ENCODE measurements at regions of chr18 and their contacts with region 1.

Region 1: DNA sequence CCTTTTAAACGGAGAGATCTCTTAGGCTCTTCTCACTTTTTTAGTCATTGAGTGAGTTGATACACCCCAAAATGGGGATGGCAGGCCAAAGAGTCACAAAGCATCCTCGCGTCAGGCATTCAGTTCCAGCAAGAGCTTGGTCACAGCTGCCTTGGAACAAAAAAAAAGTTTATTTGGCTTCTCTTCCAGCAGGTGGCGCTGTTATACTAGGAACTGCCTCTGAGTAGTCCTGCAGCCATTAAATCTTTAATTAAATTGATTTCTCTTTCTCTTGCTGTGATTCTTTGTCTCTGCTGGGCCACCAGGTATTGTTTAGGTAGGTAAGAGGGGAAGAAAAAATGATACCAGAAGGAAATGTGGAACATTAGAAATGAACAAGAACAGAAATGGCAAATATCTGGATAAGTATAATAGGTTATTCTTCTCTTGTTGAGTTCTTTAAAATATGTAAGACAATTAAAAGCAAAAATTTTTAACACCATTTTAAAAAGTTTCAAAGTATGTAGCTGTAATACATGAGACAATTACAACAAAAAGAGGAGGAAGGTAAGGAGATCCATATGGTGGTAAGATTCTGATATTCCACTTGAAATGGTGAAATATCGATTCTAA is 175.1 kb downstream of the GALNT1 start:
- DNase-seq: peak; percentile 59 to 72 (median 67)
- ATAC-seq: peak; percentile 92
- H3K4me3 ChIP-seq: no peak overlapping the region
- H3K27ac ChIP-seq: no peak overlapping the region
- H3K4me1 ChIP-seq: no peaks in the 10 kb centered on the region
- H3K27me3 ChIP-seq: peaks cover 11 to 32% of the 10 kb centered on the region in 2 experiments
- CTCF ChIP-seq: peak; percentile 72 to 89 (median 75)
- EP300 ChIP-seq: no peak
- POLR2A ChIP-seq: no peak
- RAD21 ChIP-seq: peak; percentile 93 to 95

Region 2: DNA sequence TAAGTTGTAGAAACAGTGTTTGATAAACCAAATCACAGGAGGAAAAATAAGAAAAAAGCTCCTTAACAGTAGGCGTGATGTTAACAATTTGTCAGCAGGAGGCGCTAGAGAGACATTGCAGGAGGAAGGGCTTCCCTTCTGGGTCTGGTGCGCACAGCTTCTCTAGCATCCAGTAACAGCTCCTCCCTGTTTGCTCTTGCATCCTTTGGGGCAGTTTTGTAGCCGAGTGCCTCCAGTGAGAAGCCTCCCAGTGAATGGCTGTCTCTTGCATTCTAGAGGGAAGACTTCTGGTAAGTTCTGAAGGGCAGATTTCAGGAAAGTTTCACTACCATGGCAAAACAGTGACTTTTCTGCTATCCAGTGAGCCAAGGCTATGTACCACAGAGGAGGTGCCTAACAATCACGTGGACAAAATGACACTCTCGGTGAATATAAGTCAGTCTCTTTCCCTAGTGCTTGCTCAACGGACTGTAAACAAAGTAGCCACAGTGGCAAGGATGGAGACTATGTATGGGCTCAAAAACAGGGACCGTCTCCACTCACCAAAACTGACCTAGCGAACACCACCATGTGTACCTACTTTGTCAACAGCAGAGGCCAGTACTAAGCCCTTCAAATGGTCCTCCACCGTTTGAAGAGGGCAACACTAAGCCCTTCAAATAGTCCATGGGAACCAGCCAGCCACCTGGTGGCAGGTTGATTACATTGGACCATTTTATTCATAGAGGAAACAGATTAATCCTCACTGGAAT is 369.8 kb before region 1 on chr18:
- CTCF ChIA-PET with region 1: no interaction called
- POLR2A ChIA-PET with region 1: no interaction called
- in situ Hi-C with region 1: loop called (anchors 10 kb)
- intact Hi-C with region 1: no loop called
- DNase-seq: peak; percentile 77 to 86 (median 78)
- ATAC-seq: peak; percentile 94
- H3K4me3 ChIP-seq: no peak overlapping the region
- H3K27ac ChIP-seq: no peak overlapping the region
- H3K4me1 ChIP-seq: no peaks in the 10 kb centered on the region
- H3K27me3 ChIP-seq: no peaks in the 10 kb centered on the region
- CTCF ChIP-seq: peak; percentile 82 to 98 (median 93)
- EP300 ChIP-seq: no peak
- POLR2A ChIP-seq: no peak
- RAD21 ChIP-seq: peak; percentile 83 to 89

Region 3: DNA sequence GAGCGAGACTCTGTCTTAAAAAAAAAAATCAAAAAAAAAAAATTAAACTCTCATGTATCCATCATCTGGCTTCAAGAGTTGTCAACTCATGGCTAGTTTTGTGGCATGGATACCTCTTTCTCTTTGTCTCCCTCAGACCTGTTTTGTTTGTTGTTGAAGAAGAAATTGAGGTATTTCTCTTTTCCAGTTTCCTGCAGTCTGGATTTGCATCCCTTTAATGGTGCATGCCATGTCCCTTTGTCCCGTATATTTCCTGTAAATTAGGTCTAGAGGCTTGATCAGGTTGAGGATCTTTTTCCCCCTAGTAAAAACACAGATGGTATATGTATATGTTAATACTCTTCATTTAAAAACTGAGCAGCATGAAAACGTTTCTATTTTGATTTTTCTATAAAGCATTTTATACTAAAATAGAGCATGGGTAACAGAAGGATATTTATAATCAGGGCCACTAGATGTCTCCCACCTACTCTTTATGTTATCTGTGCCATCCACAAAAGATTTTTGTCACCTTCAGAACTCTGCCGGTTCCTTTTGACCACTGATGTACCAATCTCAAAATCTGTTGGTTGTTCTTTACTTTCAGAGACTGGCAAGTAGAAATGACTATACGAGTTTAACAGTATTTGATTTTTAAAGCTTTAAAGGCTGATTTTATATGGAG is 95.0 kb before region 1 on chr18:
- CTCF ChIA-PET with region 1: no interaction called
- POLR2A ChIA-PET with region 1: no interaction called
- in situ Hi-C with region 1: no loop called
- intact Hi-C with region 1: loop called (anchors 5 kb)
- DNase-seq: no peak
- ATAC-seq: peak; percentile 63
- H3K4me3 ChIP-seq: no peak overlapping the region
- H3K27ac ChIP-seq: no peak overlapping the region
- H3K4me1 ChIP-seq: no peaks in the 10 kb centered on the region; a peak in 1 of 5 replicates
- H3K27me3 ChIP-seq: no peaks in the 10 kb centered on the region
- CTCF ChIP-seq: peak; percentile 10 to 53 (median 16); a peak in 3 of 6 replicates
- EP300 ChIP-seq: no peak
- POLR2A ChIP-seq: no peak
- RAD21 ChIP-seq: peak in 1 of 2 experiments; percentile 52; a peak in 2 of 4 replicates

Region 4: DNA sequence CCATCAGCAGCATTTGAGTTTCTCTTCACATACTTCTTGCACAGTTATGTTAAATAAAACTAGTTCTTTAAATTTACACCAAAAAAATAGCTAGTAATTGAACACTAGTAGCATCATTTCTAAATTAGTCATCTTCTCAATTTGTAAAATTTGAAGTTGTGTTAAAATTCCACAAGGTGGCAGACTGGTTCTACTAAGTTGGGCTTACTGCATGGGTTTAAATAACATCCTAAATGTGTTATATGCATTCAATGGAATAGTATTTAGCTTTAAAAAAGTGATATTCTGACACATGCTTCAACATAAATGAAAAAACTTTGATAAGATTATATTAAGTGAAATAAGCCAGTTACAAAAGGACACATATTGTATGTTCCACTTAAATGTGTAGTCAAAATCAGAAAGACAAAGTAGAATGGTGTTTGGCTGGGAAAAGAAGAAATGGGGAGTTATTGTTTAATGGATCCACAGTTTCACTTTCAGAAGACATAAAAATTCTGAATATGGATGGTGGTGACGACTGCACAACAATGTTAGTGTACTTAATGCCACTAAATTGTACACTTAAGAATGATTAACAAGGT is 339.4 kb after region 1 on chr18:
- CTCF ChIA-PET with region 1: no interaction called
- POLR2A ChIA-PET with region 1: no interaction called
- in situ Hi-C with region 1: no loop called
- intact Hi-C with region 1: loop called (anchors 5 kb)
- DNase-seq: peak; percentile 41 to 74 (median 52)
- ATAC-seq: peak; percentile 67
- H3K4me3 ChIP-seq: no peak overlapping the region
- H3K27ac ChIP-seq: no peak overlapping the region
- H3K4me1 ChIP-seq: no peaks in the 10 kb centered on the region; a peak in 1 of 5 replicates
- H3K27me3 ChIP-seq: peaks cover 5 to 8% of the 10 kb centered on the region in 2 experiments; a peak in 3 of 5 replicates
- CTCF ChIP-seq: peak; percentile 38 to 88 (median 57); a peak in 3 of 6 replicates
- EP300 ChIP-seq: no peak
- POLR2A ChIP-seq: no peak
- RAD21 ChIP-seq: peak; percentile 89 to 95

Measured in K562 (cell line).